ENCODE measurements at regions of chr1 and their contacts with region 1.

Region 1: DNA sequence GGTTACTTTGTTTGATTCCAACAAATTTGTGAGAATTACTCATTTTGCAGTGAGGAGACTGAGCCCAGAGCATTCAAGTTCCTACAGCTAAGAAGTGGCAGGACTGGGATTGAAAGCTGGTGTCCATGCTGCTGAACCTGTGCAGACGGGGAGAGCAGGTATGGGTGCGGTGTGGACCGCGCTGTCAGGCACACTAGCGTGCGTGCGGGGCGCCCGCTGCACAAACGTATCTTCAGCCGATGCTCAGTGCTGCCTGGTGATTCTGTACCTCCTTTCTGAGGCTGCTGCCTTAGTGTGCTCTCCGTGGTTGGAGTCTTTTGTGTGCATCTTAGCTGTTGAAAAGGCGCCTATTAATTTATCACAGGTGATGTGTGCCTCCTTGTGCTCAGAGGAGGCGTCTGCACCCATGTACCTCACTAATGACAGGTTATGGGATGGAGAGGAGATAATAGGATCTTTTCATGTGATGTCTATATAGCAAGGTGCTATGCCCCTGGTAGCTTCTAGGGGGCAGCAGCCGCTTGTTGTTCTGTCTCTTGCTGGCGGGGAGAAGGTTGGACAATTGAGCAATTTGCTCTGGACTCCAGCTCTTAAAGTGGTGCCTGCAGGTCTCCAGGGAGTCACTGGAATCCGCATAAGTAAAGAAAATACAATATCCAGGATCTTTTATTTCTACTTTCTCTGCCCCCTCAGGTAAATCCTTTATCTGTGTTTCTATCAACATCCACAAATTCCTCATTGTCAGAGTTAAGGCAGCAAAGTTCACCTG is 32.5 kb downstream of the PEX14 start:
- DNase-seq: peak; percentile 70
- ATAC-seq: peak; percentile 92

Region 2: GRCh38 chr1:8925406-8925805 is 1581.9 kb before region 1 on chr1:
- intact Hi-C with region 1: no loop called
- DNase-seq: no peak
- ATAC-seq: no peak

Region 3: DNA sequence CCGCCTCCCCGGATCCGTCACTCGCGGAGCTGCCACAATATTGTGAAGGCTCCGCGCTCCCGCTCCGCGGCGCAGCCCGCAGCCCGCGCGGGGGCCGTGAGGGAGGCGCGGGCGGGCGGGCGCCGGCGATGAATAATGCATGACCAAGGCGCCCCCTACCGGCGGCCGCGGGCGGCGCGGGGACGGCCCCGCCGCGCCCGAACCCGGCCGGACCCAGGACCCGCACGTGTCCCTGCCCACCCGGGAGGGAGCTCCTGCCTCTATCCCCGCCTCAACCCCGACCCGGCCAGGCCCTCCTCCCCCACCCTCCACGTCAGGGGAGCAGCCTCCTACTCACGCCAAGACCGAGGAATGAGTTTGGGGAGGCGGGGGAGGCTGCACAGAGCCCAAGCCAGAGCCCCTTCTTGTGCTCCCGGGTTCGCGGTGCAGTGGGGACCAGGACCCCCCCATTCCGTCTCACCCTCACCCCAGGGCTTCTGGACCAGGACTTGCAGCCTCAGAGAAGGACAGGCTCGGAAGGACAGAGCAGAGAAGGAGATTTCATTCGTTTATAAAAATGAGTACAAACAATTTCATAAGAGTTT is 359.9 kb after region 1 on chr1:
- intact Hi-C with region 1: loop called (anchors 10 kb)
- DNase-seq: peak; percentile 74
- ATAC-seq: peak; percentile 66